ENCODE measurements at regions of chr2 and their contacts with region 1.

Region 1: DNA sequence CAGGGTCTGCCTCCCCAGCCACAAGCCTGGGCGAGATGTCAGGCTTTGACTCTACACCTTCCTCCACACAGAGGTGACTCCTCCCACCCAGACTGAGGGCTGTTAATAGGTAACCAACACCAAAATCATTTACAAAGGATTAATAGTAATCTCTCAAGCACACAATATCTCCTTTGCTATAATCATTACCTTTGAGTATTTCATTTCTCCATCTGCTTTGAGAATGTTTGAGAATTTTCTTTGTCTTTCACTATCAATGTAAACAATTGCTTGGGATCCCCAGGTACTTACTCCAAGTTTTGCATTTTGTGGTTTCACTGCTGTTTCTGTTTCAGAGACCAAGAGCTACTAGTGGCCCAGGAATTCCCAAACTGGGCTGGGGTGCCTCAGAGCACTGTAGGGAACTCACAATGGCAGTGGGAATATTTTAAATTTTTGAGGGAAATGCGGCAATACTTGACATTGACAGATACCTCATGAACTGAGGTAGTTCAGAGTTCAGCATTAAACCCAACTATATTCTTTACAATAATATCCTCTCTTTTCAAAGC is 166.4 kb upstream of the MGAT5 start:
- DNase-seq: no peak
- ATAC-seq: no peak
- H3K4me3 ChIP-seq: no peak overlapping the region
- H3K27ac ChIP-seq: no peak overlapping the region
- H3K4me1 ChIP-seq: peaks cover 5% of the 10 kb centered on the region; the same call in 1 of the 2 replicates
- H3K27me3 ChIP-seq: no peaks in the 10 kb centered on the region
- CTCF ChIP-seq: no peak
- POLR2A ChIP-seq: no peak
- RAD21 ChIP-seq: no peak

Region 2: GRCh38 chr2:133908171-133908570 is 179.3 kb before region 1 on chr2:
- CTCF ChIA-PET with region 1: no interaction called
- POLR2A ChIA-PET with region 1: no interaction called
- dilution Hi-C with region 1: no loop called
- in situ Hi-C with region 1: loop called (anchors 10 kb)
- intact Hi-C with region 1: no loop called
- DNase-seq: no peak
- ATAC-seq: no peak
- H3K4me3 ChIP-seq: no peak overlapping the region
- H3K27ac ChIP-seq: no peak overlapping the region
- H3K4me1 ChIP-seq: no peaks in the 10 kb centered on the region
- H3K27me3 ChIP-seq: no peaks in the 10 kb centered on the region; the same call in 1 of the 2 replicates
- CTCF ChIP-seq: no peak
- POLR2A ChIP-seq: no peak
- RAD21 ChIP-seq: no peak